Activated CD4-positive, alpha-beta T cell treated with anti-CD3 and anti-CD28 coated beads, Interleukin-2, amount 10 ng/mL, durations not matched to agents 24 days and 14 days (primary cell): ENCODE measurements at regions of chr21 and their contacts with region 1.

Region 1: GRCh38 chr21:41361786-41362604 is at the start of gene MX2:
- DNase-seq: peak; percentile 95
- H3K4me3 Mint-ChIP-seq: peak within 1 kb of the TSS; percentile 89
- H3K27ac Mint-ChIP-seq: peak within 1 kb of the TSS; percentile 95
- H3K4me1 Mint-ChIP-seq: peaks cover 54% of the 10 kb centered on the region
- H3K27me3 Mint-ChIP-seq: peaks cover 2% of the 10 kb centered on the region
- total RNA-seq, gene MX2: 8.6 and 11.5 TPM in 2 replicates

Region 2: DNA sequence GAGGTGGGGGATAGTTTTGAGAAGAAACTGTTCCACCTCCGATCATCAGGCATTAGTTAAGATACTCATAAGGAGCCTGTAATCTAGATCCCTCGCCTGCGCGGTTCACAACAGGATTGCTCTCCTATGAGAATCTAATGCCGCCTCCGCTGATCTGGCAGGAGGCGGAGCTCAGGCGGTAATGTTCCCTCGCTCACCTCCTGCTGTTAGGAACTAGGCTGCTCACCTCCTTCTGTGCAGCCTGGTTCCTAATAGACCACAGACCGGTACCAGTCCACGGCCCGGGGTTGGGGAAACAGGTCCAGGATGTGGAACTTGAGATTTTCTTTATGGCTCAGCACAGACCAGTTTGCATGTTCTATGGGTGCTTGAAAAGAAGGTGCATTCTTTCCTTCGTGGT is 72.6 kb before region 1 on chr21:
- intact Hi-C with region 1: loop called (anchors 5 kb)
- DNase-seq: no peak
- H3K4me3 Mint-ChIP-seq: no peak overlapping the region
- H3K27ac Mint-ChIP-seq: no peak overlapping the region
- H3K4me1 Mint-ChIP-seq: peaks cover 5% of the 10 kb centered on the region
- H3K27me3 Mint-ChIP-seq: peaks cover 48% of the 10 kb centered on the region

Region 3: DNA sequence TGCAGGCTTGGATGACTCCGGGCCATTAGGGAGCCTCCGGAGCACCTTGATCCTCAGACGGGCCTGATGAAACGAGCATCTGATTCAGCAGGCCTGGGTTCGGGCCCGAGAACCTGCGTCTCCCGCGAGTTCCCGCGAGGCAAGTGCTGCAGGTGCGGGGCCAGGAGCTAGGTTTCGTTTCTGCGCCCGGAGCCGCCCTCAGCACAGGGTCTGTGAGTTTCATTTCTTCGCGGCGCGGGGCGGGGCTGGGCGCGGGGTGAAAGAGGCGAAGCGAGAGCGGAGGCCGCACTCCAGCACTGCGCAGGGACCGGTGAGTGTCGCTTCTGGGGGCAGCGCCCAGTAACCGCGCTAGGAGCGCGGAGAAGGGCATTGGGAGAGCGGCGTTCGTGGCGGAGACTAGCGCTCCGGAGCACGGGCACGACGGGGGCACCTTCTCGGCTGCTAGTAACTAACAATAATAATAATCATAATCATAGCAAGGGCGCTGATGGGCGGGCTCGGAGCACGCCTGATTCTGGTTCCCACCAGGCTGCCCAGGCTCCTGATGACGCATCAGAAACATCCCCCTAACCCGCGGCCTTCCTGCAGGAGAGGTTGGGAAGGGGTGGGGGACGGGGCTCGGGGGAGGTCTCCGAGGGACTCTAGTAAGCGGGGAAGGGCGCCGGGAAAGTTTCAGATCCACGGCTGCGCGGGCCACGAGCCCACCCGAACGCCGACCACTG is 64.1 kb after region 1 on chr21 and contains the start of gene MX1:
- intact Hi-C with region 1: loop called (anchors 2 kb)
- DNase-seq: peak; percentile 98
- H3K4me3 Mint-ChIP-seq: peak within 1 kb of the TSS; percentile 97
- H3K27ac Mint-ChIP-seq: peak within 1 kb of the TSS; percentile 98
- H3K4me1 Mint-ChIP-seq: peaks cover 78% of the 10 kb centered on the region
- H3K27me3 Mint-ChIP-seq: no peaks in the 10 kb centered on the region
- total RNA-seq, gene MX1: 88.8 and 90.5 TPM in 2 replicates

Region 4: GRCh38 chr21:41648591-41649031 is 286.6 kb after region 1 on chr21:
- intact Hi-C with region 1: no loop called
- DNase-seq: no peak
- H3K4me3 Mint-ChIP-seq: no peak overlapping the region
- H3K27ac Mint-ChIP-seq: no peak overlapping the region
- H3K4me1 Mint-ChIP-seq: no peaks in the 10 kb centered on the region
- H3K27me3 Mint-ChIP-seq: peaks cover 7% of the 10 kb centered on the region